ENCODE measurements at regions of chr14 and their contacts with region 1.

Region 1: DNA sequence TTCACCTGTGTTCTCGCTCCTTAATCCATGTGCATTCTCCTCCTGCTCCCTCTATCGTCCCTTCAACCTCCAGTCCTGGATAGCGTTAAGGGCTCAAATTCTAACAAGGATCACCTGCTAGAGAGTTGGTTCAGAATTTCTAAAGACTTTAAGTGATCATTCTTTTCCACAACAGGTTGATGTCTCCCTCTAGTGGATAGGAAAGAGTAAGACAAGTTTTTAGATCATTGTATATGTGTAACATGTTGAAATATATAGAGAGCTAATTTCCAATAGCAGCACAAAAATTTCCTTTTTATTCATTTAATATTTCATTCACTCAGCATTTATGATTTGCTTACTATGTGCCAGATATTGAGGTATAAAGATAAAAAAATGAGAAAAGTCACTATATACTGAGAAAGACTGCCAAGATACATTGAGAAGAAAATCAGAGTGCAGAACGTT is 9.3 kb upstream of the ESR2 start:
- DNase-seq: peak in 6 of 9 donors; percentile 10 to 58 (median 48)
- ATAC-seq: peak; percentile 79
- H3K4me3 ChIP-seq: no peak overlapping the region
- H3K4me3 Mint-ChIP-seq: no peak overlapping the region
- H3K27ac ChIP-seq: no peak overlapping the region
- H3K27ac Mint-ChIP-seq: no peak overlapping the region
- H3K4me1 ChIP-seq: no peaks in the 10 kb centered on the region
- H3K4me1 Mint-ChIP-seq: peaks cover 0 to 6% (median 3%) of the 10 kb centered on the region in 7 donors
- H3K27me3 ChIP-seq: no peaks in the 10 kb centered on the region
- H3K27me3 Mint-ChIP-seq: peaks cover 0 to 10% (median 4%) of the 10 kb centered on the region in 5 donors

Region 2: GRCh38 chr14:62988967-62989366 is 1314.5 kb before region 1 on chr14:
- CTCF ChIA-PET with region 1: no interaction called
- POLR2A ChIA-PET with region 1: no interaction called
- intact Hi-C with region 1: no loop called
- DNase-seq: no peak
- ATAC-seq: no peak
- H3K4me3 ChIP-seq: no peak overlapping the region
- H3K4me3 Mint-ChIP-seq: no peak overlapping the region
- H3K27ac ChIP-seq: no peak overlapping the region
- H3K27ac Mint-ChIP-seq: no peak overlapping the region
- H3K4me1 ChIP-seq: no peaks in the 10 kb centered on the region
- H3K4me1 Mint-ChIP-seq: no peaks in the 10 kb centered on the region
- H3K27me3 ChIP-seq: no peaks in the 10 kb centered on the region
- H3K27me3 Mint-ChIP-seq: peaks cover 0 to 4% (median 0%) of the 10 kb centered on the region in 5 donors

Region 3: DNA sequence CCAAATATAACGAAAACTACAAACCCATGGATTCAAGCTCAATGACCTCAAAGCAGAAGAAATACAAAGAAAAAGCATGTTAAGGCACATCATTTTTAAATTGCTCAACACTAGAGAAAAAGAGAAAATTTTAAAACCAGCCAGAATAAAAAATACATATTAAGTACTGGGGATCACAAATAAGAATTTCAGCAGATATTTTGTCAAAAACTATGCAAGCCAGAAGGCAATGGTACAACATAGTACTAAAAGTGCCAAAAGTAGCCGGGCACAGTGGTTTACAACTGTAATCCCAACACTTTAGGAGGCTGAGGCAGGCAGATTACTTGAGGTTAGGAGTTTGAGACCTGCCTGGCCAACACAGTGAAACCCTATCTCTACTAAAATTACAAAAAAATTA is 585.8 kb before region 1 on chr14:
- CTCF ChIA-PET with region 1: no interaction called
- POLR2A ChIA-PET with region 1: no interaction called
- intact Hi-C with region 1: no loop called
- DNase-seq: peak in 4 of 9 donors; percentile 24 to 47 (median 36)
- ATAC-seq: no peak
- H3K4me3 ChIP-seq: no peak overlapping the region
- H3K4me3 Mint-ChIP-seq: peak overlapping the region in 1 of 10 donors; percentile 12
- H3K27ac ChIP-seq: no peak overlapping the region
- H3K27ac Mint-ChIP-seq: no peak overlapping the region
- H3K4me1 ChIP-seq: peaks cover 0 to 11% of the 10 kb centered on the region in 2 donors
- H3K4me1 Mint-ChIP-seq: peaks cover 12 to 33% (median 27%) of the 10 kb centered on the region in 7 donors
- H3K27me3 ChIP-seq: no peaks in the 10 kb centered on the region
- H3K27me3 Mint-ChIP-seq: no peaks in the 10 kb centered on the region

Region 4: GRCh38 chr14:63800651-63801375 is 502.7 kb before region 1 on chr14:
- CTCF ChIA-PET with region 1: interaction called, 12 read pairs
- POLR2A ChIA-PET with region 1: no interaction called
- intact Hi-C with region 1: loop called (anchors 1 to 2 kb)
- DNase-seq: no peak
- ATAC-seq: no peak
- H3K4me3 ChIP-seq: no peak overlapping the region
- H3K4me3 Mint-ChIP-seq: no peak overlapping the region
- H3K27ac ChIP-seq: no peak overlapping the region
- H3K27ac Mint-ChIP-seq: peak overlapping the region in 1 of 9 donors; percentile 46
- H3K4me1 ChIP-seq: no peaks in the 10 kb centered on the region
- H3K4me1 Mint-ChIP-seq: peaks cover 3 to 12% (median 4%) of the 10 kb centered on the region in 7 donors
- H3K27me3 ChIP-seq: no peaks in the 10 kb centered on the region
- H3K27me3 Mint-ChIP-seq: peaks cover 0 to 17% (median 0%) of the 10 kb centered on the region in 5 donors

Region 5: GRCh38 chr14:64012720-64013119 is 290.8 kb before region 1 on chr14:
- CTCF ChIA-PET with region 1: no interaction called
- POLR2A ChIA-PET with region 1: no interaction called
- intact Hi-C with region 1: loop called (anchors 5 to 10 kb)
- DNase-seq: no peak
- ATAC-seq: no peak
- H3K4me3 ChIP-seq: no peak overlapping the region
- H3K4me3 Mint-ChIP-seq: no peak overlapping the region
- H3K27ac ChIP-seq: no peak overlapping the region
- H3K27ac Mint-ChIP-seq: no peak overlapping the region
- H3K4me1 ChIP-seq: no peaks in the 10 kb centered on the region
- H3K4me1 Mint-ChIP-seq: no peaks in the 10 kb centered on the region
- H3K27me3 ChIP-seq: no peaks in the 10 kb centered on the region
- H3K27me3 Mint-ChIP-seq: no peaks in the 10 kb centered on the region

Region 6: DNA sequence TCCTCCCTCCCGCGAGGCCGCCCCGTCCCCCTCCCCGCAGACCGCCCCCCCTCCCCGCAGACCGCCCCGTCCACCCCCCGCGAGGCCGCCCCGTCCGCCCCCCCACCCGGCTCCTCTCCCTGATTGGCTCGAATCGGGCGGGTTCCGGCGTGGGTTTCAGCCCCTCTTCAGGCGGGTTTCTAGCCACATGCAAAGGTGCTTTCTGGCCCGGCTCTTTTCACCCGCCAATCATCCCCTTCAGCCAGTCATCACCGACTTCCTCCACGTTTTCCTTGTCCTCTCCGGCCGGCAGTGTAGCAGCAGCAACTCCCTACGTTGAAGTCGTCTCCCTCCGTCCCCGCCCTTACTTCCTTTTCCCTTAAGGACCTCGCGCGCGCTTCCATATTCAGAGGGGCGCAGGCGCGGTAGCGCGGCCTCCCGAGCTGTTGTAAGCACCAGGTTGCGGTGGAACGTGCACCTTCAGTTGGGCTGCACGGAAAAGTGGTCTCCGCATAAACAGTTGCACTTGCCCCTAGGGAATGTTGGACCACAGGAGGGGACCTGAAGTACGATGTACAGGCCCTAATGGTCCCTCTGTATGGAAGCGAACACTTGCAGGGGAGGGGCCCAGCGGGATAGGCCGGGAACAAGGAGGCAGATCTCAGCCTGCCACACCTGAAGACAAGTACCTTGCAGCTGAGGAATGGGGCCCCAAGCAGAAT is 35.3 kb after region 1 on chr14:
- CTCF ChIA-PET with region 1: interaction called, 6 read pairs
- POLR2A ChIA-PET with region 1: no interaction called
- intact Hi-C with region 1: loop called in 1 of 2 experiments (anchors 1 kb)
- DNase-seq: peak; percentile 50 to 84 (median 79)
- ATAC-seq: peak; percentile 87
- H3K4me3 ChIP-seq: peak overlapping the region; percentile 57
- H3K4me3 Mint-ChIP-seq: peak overlapping the region; percentile 87 to 99 (median 92)
- H3K27ac ChIP-seq: peak overlapping the region; percentile 72
- H3K27ac Mint-ChIP-seq: peak overlapping the region; percentile 81 to 91 (median 86)
- H3K4me1 ChIP-seq: peaks cover 5 to 10% of the 10 kb centered on the region in 2 donors
- H3K4me1 Mint-ChIP-seq: peaks cover 6 to 36% (median 19%) of the 10 kb centered on the region in 7 donors
- H3K27me3 ChIP-seq: no peaks in the 10 kb centered on the region
- H3K27me3 Mint-ChIP-seq: no peaks in the 10 kb centered on the region

Region 7: GRCh38 chr14:64758025-64758521 is 454.6 kb after region 1 on chr14:
- CTCF ChIA-PET with region 1: no interaction called
- POLR2A ChIA-PET with region 1: no interaction called
- intact Hi-C with region 1: no loop called
- DNase-seq: no peak
- ATAC-seq: no peak
- H3K4me3 ChIP-seq: no peak overlapping the region
- H3K4me3 Mint-ChIP-seq: no peak overlapping the region
- H3K27ac ChIP-seq: no peak overlapping the region
- H3K27ac Mint-ChIP-seq: no peak overlapping the region
- H3K4me1 ChIP-seq: peaks cover 0 to 70% of the 10 kb centered on the region in 2 donors
- H3K4me1 Mint-ChIP-seq: peaks cover 0 to 53% (median 13%) of the 10 kb centered on the region in 7 donors
- H3K27me3 ChIP-seq: no peaks in the 10 kb centered on the region
- H3K27me3 Mint-ChIP-seq: peaks cover 0 to 19% (median 0%) of the 10 kb centered on the region in 5 donors

Measured in naive thymus-derived CD4-positive, alpha-beta T cell (primary cell).